GM13976 (cell line): ENCODE measurements at regions of chr5 and their contacts with region 1.

Region 1: GRCh38 chr5:63963080-63963735 is 963 bp upstream of the HTR1A start:
- DNase-seq: peak; percentile 65
- CTCF ChIP-seq: peak; percentile 71

Region 2: DNA sequence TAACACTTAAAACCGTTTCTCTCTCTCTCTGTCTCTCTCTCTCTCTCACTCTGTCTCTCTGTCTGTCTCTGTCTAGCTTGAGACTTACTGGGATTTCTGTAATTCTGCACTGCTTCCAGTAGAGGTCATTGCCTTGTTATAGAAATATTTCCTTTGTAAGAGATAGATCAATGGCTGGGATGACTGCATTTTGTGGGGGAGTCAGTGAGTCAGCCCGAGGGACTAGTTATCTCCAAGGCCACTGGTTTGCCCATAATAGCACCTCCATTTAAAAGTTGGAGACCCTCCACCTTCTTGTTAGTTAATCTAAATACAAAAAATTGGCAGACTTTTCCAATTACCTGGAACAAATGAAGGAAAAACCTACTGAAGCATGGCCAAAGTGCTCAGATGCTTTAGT is 837.3 kb before region 1 on chr5:
- in situ Hi-C with region 1: loop called (anchors 25 kb)
- DNase-seq: no peak
- CTCF ChIP-seq: peak; percentile 25

Region 3: GRCh38 chr5:63398346-63398745 is 564.9 kb before region 1 on chr5:
- in situ Hi-C with region 1: loop called (anchors 25 kb)
- DNase-seq: no peak
- CTCF ChIP-seq: no peak